ENCODE measurements at regions of chr6 and their contacts with region 1.

Region 1: DNA sequence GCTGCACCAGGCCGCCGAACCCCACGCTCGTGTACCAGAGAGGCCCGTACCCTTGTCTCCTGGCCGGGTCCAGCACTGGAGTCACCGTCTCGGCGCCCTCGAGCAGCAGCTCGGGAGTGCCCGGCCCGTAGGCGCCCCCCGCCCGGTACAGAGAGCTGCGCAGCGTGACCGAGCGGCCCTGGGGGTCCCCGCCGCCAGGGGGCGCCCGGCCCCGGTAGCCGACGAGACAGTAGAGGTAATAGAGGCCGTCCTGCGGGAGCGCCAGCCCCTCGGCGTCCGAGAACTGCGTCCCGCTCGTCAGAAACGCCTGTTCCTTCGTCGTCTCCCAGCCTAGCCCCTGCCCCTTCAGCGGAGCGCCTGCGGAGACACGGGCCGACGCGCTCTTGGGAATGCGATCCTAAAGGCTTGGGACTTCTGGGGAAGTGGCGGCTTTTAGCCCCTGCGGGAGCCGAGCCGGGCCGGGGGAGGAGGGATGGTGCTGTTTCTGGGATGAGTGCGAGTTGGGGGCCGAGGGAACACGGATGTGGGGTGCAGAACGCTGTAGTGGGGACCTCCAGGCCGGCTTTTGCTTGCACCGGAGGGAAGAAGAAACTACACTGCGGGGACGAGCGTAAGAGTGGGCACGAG is 1.3 kb downstream of the LTB start:
- DNase-seq: peak; percentile 96
- ATAC-seq: peak; percentile 98

Region 2: GRCh38 chr6:31546962-31547726 is 33.8 kb before region 1 on chr6 and contains the start of gene NFKBIL1:
- intact Hi-C with region 1: loop called (anchors 2 kb)
- DNase-seq: peak; percentile 95
- ATAC-seq: peak; percentile 97
- total RNA-seq, gene NFKBIL1: 10.8 TPM

Region 3: DNA sequence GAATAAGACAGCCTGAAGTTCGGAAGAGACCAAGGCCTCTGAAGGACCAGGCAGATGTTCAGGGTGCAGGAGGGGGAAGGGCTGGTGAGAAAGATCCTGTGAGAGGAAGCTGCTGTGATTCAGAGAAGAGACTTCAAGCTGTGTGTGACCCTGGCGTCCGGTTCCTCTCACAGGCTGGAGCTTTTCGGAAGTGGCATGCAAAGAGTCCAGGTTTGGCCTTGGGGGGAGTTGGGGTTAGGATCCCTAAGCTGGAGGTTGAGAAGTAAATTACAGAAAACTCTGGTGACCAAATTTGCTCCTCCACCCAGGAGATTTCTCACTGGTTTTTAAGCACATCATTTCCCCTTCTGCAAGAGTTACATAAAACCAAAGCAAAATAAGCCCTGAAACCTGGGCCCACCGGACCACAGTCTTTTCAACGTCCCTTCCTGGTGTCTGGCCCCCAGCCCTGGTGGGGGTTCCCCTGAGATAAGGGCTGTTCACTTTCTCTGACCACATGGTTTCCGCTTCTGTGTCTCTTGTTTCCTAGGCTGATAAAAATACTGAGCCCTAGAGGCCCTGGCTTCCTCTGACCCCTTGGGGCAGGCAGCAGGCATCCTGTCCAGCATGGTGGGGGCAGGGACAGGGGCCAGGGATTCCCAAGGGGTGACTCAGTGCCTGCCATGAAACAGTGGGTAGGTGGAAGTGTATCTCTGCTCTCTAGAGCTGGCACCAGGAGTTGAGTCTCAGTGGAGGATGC is 20.8 kb before region 1 on chr6:
- intact Hi-C with region 1: loop called (anchors 2 kb)
- DNase-seq: no peak
- ATAC-seq: peak; percentile 74

Region 4: DNA sequence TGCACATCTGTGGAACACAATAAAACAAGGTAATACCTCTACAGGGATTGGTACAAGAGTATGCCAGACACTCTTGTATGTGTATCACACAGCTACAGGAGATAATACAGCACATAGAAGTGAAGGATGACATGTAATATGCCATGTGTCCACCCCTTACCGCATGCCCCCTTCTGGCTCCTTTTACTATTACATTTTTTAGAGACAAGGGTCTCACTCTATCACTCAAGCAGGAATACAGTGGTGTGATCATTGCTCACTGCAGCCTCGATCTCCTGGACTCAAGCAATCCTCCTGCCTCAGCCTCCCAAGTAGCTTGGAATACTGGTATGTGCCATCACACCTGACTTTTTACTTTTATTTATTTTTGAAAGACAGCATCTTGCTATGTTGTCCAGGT is 16.1 kb after region 1 on chr6:
- intact Hi-C with region 1: loop called (anchors 2 kb)
- DNase-seq: no peak
- ATAC-seq: peak; percentile 47

Region 5: GRCh38 chr6:31643818-31644454 is 63.0 kb after region 1 on chr6:
- intact Hi-C with region 1: no loop called
- DNase-seq: no peak
- ATAC-seq: peak; percentile 9

Measured in Right ventricle myocardium inferior (tissue), 1 donor.